ENCODE measurements at regions of chr5 and their contacts with region 1.

Region 1: DNA sequence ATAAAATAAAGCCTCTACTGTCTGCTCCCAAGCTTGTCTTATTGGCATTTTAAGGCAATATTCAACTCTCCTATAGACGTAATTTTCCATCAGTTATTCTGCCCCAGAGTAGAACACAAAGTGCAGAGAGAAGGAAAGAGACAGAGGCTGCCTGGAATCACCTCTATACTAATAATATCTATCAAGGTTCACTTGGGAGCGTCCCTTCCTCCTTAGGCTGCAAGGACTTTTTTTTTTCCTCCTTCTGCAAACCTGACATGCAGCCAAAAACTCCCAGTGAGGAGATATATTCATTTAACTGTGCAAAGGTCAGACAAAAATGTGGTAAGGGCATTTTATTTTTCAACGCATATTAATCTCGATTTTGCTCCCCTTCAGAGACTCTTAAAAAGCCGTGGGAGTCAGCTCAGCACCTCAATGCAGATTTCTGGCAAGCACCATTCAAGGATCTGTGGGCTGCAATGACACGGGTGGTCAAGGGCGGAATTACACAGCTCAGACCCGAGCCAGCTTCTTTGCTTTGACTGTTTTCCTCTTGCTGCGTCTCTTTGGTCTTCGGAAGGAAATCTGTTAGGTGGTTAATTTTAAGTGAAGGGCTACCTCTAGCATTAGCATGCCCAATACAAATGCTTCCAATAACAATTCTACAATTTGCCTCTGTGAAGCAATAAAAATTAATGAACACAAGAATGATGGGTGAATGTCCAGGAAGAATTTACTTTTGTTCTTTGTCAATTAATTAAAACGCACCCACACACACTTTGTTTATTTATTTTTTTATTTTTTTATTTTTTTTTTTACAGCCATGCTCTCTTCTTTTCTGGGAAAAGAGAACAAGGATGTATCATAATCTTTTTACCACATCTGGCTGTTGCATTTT is 587.7 kb upstream of the GRAMD2B start:
- DNase-seq: peak; percentile 15 to 30
- ATAC-seq: peak; percentile 59 to 83 (median 70)
- H3K4me3 ChIP-seq: peak overlapping the region in 4 of 10 donors; percentile 10 to 43 (median 30)
- H3K27ac ChIP-seq: no peak overlapping the region
- H3K4me1 ChIP-seq: peaks cover 0 to 17% (median 5%) of the 10 kb centered on the region in 9 donors
- H3K27me3 ChIP-seq: no peaks in the 10 kb centered on the region
- CTCF ChIP-seq: peak; percentile 50 to 79 (median 69)

Region 2: GRCh38 chr5:123937230-123937629 is 1898.3 kb before region 1 on chr5:
- intact Hi-C with region 1: loop called in 1 of 10 experiments (anchors 10 kb)
- DNase-seq: peak in 1 of 2 donors; percentile 62
- ATAC-seq: peak in 5 of 8 donors; percentile 55 to 64 (median 62)
- H3K4me3 ChIP-seq: no peak overlapping the region
- H3K27ac ChIP-seq: no peak overlapping the region
- H3K4me1 ChIP-seq: no peaks in the 10 kb centered on the region
- H3K27me3 ChIP-seq: no peaks in the 10 kb centered on the region
- CTCF ChIP-seq: peak; percentile 33 to 75 (median 63)

Measured in heart right ventricle (tissue), 16 donors.